Transverse colon (tissue), 4 donors: ENCODE measurements at regions of chr11 and their contacts with region 1.

Region 1: DNA sequence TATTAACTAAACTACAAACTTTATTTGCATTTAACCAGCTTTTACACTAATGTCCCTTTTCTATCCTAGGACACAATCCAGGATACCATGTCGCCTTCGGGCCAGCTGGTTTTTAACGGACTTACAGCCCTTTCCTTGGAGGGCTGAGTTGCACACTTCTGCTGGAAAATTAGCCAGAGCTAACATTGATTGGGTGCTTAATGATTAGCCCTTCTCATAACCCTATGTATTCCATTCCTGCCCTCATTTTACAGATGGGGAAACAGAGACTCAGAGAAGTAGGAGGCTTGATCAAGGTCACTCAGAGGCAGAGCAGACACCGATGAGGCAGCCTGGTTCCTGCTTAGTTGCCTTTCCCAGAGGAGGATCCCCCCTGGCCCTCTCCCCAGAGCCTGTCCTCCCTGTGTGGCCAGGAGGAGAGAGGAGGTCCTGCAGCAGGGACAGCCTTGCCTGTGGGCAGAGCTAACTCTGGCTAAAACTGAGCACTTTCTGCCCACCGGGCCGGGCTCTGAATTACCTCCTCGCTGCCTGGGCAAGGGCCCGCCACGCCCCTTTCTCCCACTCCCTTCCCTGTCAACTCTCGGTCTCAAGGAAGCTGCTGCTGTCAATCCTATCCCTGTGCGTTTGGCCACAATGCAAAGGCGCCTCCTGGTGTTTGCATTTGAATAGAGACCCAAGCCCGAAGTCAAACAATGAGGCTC is 59.6 kb upstream of the PAX6 start:
- DNase-seq: peak; percentile 26
- H3K4me3 ChIP-seq: no peak overlapping the region
- H3K27ac ChIP-seq: no peak overlapping the region
- H3K4me1 ChIP-seq: no peaks in the 10 kb centered on the region
- H3K27me3 ChIP-seq: peaks cover 21% of the 10 kb centered on the region
- CTCF ChIP-seq: peak; percentile 19 to 60 (median 45)
- EP300 ChIP-seq: no peak
- POLR2A ChIP-seq: no peak

Region 2: DNA sequence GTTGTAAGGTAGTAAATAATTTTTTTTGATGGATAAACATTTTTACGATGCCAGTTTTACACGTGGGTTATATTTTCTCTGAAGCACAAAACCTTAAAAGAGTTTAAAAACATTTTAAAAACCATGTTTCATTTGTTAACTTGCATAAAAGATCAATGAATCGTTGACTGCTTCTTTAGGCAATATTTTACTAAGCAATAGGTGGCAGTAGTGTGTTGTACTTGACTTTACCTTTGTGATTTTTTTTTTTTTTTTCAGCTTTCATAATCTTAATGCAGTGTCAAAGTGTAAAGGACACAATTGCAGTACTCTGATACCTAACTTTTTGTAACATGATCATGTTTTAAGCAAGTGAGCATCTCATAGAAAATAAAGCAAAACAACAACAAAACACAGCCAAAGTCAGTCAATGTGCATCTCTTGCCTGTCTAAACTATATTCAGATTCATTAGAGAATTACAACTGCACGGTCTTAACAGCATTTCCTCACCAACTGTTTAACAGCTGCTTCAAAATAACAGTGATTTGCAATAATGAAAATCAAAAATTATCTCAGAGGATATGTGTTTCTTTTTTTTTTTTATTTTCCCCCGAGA is 473.4 kb before region 1 on chr11:
- in situ Hi-C with region 1: loop called in 1 of 4 experiments (anchors 10 kb)
- intact Hi-C with region 1: no loop called
- DNase-seq: no peak
- H3K4me3 ChIP-seq: no peak overlapping the region
- H3K27ac ChIP-seq: no peak overlapping the region
- H3K4me1 ChIP-seq: no peaks in the 10 kb centered on the region
- H3K27me3 ChIP-seq: no peaks in the 10 kb centered on the region
- CTCF ChIP-seq: peak; percentile 42 to 46 (median 43)
- EP300 ChIP-seq: no peak
- POLR2A ChIP-seq: no peak

Region 3: GRCh38 chr11:31487848-31488247 is 382.9 kb before region 1 on chr11:
- in situ Hi-C with region 1: loop called in 1 of 4 experiments (anchors 25 kb)
- intact Hi-C with region 1: no loop called
- DNase-seq: no peak
- H3K4me3 ChIP-seq: no peak overlapping the region
- H3K27ac ChIP-seq: no peak overlapping the region
- H3K4me1 ChIP-seq: no peaks in the 10 kb centered on the region
- H3K27me3 ChIP-seq: no peaks in the 10 kb centered on the region
- CTCF ChIP-seq: peak in 2 of 5 experiments; percentile 18 to 32
- EP300 ChIP-seq: no peak
- POLR2A ChIP-seq: no peak

Region 4: DNA sequence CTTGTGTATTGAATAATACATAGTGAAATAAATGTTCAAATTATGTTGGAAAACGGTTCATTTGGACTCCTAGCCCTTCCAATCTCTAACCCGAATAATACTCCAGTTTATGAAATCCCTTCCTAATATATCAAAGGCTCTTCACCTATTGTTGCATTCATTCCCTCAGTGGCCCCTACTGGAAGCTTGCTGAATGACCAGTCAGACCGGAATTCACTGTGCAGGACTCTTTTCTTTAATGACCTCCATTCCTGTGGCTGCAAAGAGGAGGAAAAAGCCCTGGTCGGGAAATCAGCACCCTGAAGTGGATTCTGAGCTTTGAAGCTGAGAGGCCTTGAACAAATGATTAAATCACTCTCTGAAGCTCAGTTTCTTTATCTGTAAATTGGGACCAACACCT is 201.1 kb after region 1 on chr11:
- in situ Hi-C with region 1: no loop called
- intact Hi-C with region 1: no loop called
- DNase-seq: no peak
- H3K4me3 ChIP-seq: no peak overlapping the region
- H3K27ac ChIP-seq: no peak overlapping the region
- H3K4me1 ChIP-seq: no peaks in the 10 kb centered on the region
- H3K27me3 ChIP-seq: peaks cover 57% of the 10 kb centered on the region
- CTCF ChIP-seq: peak in 1 of 5 experiments; percentile 16
- EP300 ChIP-seq: no peak
- POLR2A ChIP-seq: no peak